ENCODE measurements at regions of chr9 and their contacts with region 1.

Region 1: GRCh38 chr9:77851882-77852595 is 179.6 kb downstream of the GNAQ start:
- DNase-seq: no peak
- H3K4me3 ChIP-seq: no peak overlapping the region
- H3K4me3 Mint-ChIP-seq: no peak overlapping the region
- H3K27ac Mint-ChIP-seq: no peak overlapping the region
- H3K4me1 ChIP-seq: no peaks in the 10 kb centered on the region
- H3K4me1 Mint-ChIP-seq: no peaks in the 10 kb centered on the region
- H3K27me3 ChIP-seq: no peaks in the 10 kb centered on the region
- H3K27me3 Mint-ChIP-seq: no peaks in the 10 kb centered on the region
- CTCF ChIP-seq: no peak

Region 2: GRCh38 chr9:77916410-77916819 is 64.4 kb after region 1 on chr9:
- CTCF ChIA-PET with region 1: no interaction called
- POLR2A ChIA-PET with region 1: no interaction called
- intact Hi-C with region 1: loop called (anchors 10 kb)
- DNase-seq: no peak
- H3K4me3 ChIP-seq: no peak overlapping the region
- H3K4me3 Mint-ChIP-seq: no peak overlapping the region
- H3K27ac Mint-ChIP-seq: no peak overlapping the region
- H3K4me1 ChIP-seq: no peaks in the 10 kb centered on the region
- H3K4me1 Mint-ChIP-seq: no peaks in the 10 kb centered on the region
- H3K27me3 ChIP-seq: no peaks in the 10 kb centered on the region
- H3K27me3 Mint-ChIP-seq: no peaks in the 10 kb centered on the region
- CTCF ChIP-seq: no peak